Caco-2 (cell line): ENCODE measurements at regions of chr12 and their contacts with region 1.

Region 1: DNA sequence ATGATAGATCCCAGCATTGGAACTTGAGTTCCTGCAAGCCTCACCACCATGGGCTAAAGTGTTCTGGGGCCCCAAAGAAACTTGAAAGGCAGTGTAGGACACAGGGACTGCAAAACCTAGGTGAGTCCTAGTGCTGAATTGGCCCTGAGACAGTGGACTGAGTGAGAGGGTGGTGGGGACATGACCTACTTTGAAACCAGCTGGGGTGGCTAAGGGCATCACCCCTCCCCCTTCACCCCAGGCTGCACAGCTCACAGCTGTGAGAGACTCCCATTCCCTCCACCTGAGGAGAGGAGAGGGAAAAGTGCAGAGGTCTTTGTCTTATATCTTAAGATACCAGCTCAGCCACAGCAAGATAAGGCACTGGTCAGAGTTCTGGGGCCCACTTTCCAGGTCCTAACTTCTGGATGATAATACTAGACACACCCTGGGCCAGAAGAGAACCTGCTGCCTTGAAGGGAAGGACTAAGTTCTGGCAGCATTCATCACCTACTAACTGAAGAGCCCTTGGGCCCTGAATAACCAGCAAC is 62.5 kb downstream of the MAPKAPK5 start:
- DNase-seq: no peak
- H3K4me3 ChIP-seq: no peak overlapping the region
- H3K4me3 Mint-ChIP-seq: no peak overlapping the region
- H3K27ac Mint-ChIP-seq: no peak overlapping the region
- H3K4me1 ChIP-seq: no peaks in the 10 kb centered on the region
- H3K4me1 Mint-ChIP-seq: no peaks in the 10 kb centered on the region
- H3K27me3 ChIP-seq: no peaks in the 10 kb centered on the region
- H3K27me3 Mint-ChIP-seq: no peaks in the 10 kb centered on the region
- CTCF ChIP-seq: no peak

Region 2: DNA sequence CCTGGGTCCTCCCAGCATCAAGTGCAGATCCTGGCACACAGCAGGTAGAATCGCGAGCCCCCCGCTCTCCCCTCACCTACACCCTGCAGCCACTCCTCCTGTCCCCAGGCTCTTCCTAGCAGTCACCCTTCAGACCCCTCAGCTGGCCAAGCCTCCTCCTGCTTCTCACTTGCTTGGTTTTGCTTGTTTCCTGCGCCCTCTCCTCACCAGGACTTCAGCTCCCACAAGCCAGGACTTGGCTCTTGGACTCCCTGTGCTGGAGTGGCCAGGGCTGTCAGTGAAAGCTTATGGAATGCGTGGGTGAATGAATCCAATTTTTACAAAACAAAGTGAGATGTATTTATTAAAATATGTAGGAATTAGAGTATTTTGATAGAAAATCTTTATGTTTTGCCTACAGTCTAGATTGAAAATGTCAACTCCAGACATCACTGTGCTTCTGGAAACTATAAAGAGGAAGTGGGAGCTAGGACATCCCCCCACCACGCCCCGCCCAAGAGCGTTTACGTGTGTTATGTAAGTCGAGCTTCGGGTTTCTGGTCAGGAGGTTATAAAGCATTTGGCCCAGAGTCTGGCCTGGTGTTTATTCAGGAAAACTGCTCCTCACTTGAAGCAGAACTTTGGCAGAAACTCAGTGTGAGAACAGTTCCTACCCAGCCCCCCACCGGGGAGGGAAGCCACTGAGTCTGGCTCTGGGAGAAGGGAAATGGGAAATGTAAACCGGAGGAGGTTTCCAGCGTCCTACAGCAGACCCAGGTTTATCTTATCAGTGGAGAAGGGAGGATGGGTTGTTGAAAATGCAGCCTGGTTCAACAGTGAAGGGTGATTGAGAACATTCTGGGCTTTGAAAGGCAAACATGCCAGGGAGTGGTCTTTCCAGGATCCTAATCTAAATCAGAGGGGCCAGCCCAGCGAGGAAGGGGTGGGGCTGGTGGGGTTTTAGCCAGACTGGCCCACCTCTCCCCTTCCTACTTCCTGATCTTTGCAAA is 129.0 kb before region 1 on chr12:
- CTCF ChIA-PET with region 1: no interaction called
- POLR2A ChIA-PET with region 1: interaction called, 10 read pairs
- intact Hi-C with region 1: no loop called
- DNase-seq: peak; percentile 75 to 82
- H3K4me3 ChIP-seq: peak overlapping the region; percentile 4; the same call in 1 of the 2 replicates
- H3K4me3 Mint-ChIP-seq: peak overlapping the region; percentile 77
- H3K27ac Mint-ChIP-seq: peak overlapping the region; percentile 94
- H3K4me1 ChIP-seq: peaks cover 40% of the 10 kb centered on the region
- H3K4me1 Mint-ChIP-seq: peaks cover 39% of the 10 kb centered on the region
- H3K27me3 ChIP-seq: no peaks in the 10 kb centered on the region
- H3K27me3 Mint-ChIP-seq: no peaks in the 10 kb centered on the region
- CTCF ChIP-seq: no peak

Region 3: DNA sequence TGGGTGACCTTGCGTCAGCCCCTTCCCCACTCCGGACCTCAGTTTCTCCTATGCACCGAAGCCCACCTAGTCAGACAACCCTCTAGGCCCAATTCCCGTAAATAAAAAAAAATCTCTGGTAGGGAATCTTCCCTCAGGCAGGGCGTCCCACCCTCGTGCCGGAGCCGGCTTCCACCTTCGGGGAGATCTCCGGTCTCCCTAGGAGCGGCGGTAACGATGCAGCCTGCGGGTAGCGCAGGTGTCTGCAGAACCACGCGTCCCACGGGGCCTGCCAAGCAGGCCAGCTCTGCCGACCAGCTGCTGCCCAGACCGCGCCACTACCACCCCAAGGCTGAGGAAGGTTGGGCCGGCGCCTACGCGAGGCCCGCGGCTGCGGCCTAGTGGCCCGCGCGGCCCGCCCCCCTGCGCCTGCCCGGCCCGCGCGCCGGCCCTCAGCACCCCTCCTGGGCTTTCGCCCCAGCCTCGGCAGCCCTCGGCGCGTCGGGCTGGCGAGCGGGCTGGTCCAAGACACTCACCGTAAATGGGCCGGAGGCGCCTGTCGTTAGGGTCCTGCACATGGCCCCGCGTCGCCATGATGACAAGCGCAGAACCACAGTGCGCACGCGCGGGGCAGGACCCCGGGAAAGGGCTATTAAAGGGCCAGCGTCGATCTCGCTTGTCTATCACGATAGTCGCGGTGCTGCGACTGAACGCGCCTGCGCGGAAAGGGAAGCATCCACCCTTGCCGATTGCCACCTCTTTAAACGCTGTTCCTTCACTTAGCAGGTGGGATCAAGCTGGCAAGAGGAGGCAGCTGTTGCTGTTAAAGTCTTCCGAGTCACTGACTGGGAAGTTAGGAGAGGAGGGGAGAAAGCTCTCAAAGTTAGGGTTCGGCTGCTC is 203.9 kb after region 1 on chr12 and contains the start of gene NAA25:
- CTCF ChIA-PET with region 1: no interaction called
- POLR2A ChIA-PET with region 1: no interaction called
- intact Hi-C with region 1: no loop called
- DNase-seq: peak; percentile 88 to 90
- H3K4me3 ChIP-seq: peak within 1 kb of the TSS; percentile 66
- H3K4me3 Mint-ChIP-seq: peak within 1 kb of the TSS; percentile 91
- H3K27ac Mint-ChIP-seq: peak within 1 kb of the TSS; percentile 94
- H3K4me1 ChIP-seq: peaks cover 14% of the 10 kb centered on the region
- H3K4me1 Mint-ChIP-seq: peaks cover 14% of the 10 kb centered on the region
- H3K27me3 ChIP-seq: no peaks in the 10 kb centered on the region
- H3K27me3 Mint-ChIP-seq: no peaks in the 10 kb centered on the region
- CTCF ChIP-seq: no peak
- total RNA-seq, gene NAA25: 41.0 and 42.3 TPM in 2 replicates